Activated CD4-positive, alpha-beta T cell treated with anti-CD3 and anti-CD28 coated beads for 36 hours (primary cell): ENCODE measurements at regions of chr9 and their contacts with region 1.

Region 1: GRCh38 chr9:14978022-14979000 is 68.1 kb upstream of the FREM1 start:
- DNase-seq: no peak
- ATAC-seq: no peak
- H3K4me3 Mint-ChIP-seq: no peak overlapping the region
- H3K27ac Mint-ChIP-seq: no peak overlapping the region
- H3K4me1 Mint-ChIP-seq: no peaks in the 10 kb centered on the region
- H3K27me3 Mint-ChIP-seq: no peaks in the 10 kb centered on the region

Region 2: GRCh38 chr9:14645648-14646047 is 332.7 kb before region 1 on chr9:
- CTCF ChIA-PET with region 1: no interaction called
- POLR2A ChIA-PET with region 1: no interaction called
- intact Hi-C with region 1: loop called in 1 of 2 experiments (anchors 5 kb)
- DNase-seq: no peak
- ATAC-seq: no peak
- H3K4me3 Mint-ChIP-seq: no peak overlapping the region
- H3K27ac Mint-ChIP-seq: no peak overlapping the region
- H3K4me1 Mint-ChIP-seq: peaks cover 6% of the 10 kb centered on the region
- H3K27me3 Mint-ChIP-seq: no peaks in the 10 kb centered on the region

Region 3: GRCh38 chr9:15018096-15018637 is 39.9 kb after region 1 on chr9:
- CTCF ChIA-PET with region 1: no interaction called
- POLR2A ChIA-PET with region 1: no interaction called
- intact Hi-C with region 1: no loop called
- DNase-seq: no peak
- ATAC-seq: no peak
- H3K4me3 Mint-ChIP-seq: no peak overlapping the region
- H3K27ac Mint-ChIP-seq: no peak overlapping the region
- H3K4me1 Mint-ChIP-seq: no peaks in the 10 kb centered on the region
- H3K27me3 Mint-ChIP-seq: peaks cover 4% of the 10 kb centered on the region